WTC11 (cell line): ENCODE measurements at regions of chr3 and their contacts with region 1.

Region 1: GRCh38 chr3:24726423-24726822 is 231.8 kb upstream of the THRB start:
- DNase-seq: no peak
- ATAC-seq: no peak
- H3K4me3 Mint-ChIP-seq: no peak overlapping the region
- H3K27ac Mint-ChIP-seq: no peak overlapping the region
- H3K4me1 Mint-ChIP-seq: no peaks in the 10 kb centered on the region
- H3K27me3 Mint-ChIP-seq: no peaks in the 10 kb centered on the region; the same call in 1 of the 2 replicates
- CTCF ChIP-seq: no peak

Region 2: GRCh38 chr3:24680214-24680967 is 46.0 kb before region 1 on chr3:
- CTCF ChIA-PET with region 1: interaction called, 10 read pairs
- POLR2A ChIA-PET with region 1: no interaction called
- DNase-seq: peak; percentile 83
- ATAC-seq: peak; percentile 71
- H3K4me3 Mint-ChIP-seq: no peak overlapping the region
- H3K27ac Mint-ChIP-seq: no peak overlapping the region
- H3K4me1 Mint-ChIP-seq: peaks cover 20% of the 10 kb centered on the region
- H3K27me3 Mint-ChIP-seq: no peaks in the 10 kb centered on the region
- CTCF ChIP-seq: peak; percentile 74

Region 3: DNA sequence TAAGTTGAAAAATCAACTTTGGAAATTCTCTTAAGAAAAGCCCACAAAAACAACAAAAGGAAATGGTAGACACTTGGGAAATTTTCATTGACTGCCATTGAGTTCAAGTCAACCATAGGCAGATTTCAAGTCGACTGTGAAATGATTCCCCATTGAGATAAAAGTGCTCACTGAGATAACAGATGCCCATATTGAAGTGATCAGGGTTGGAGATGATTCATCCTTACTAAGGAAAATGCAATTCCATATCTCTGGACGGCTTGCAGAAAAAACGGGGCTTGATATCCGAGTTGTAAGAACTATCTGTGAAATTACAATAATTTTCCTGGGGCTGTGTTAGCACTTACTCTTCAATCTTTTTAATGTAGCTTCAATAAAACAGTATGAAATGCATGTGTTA is 141.4 kb after region 1 on chr3:
- CTCF ChIA-PET with region 1: no interaction called
- POLR2A ChIA-PET with region 1: no interaction called
- DNase-seq: no peak
- ATAC-seq: no peak
- H3K4me3 Mint-ChIP-seq: no peak overlapping the region
- H3K27ac Mint-ChIP-seq: no peak overlapping the region
- H3K4me1 Mint-ChIP-seq: peaks cover 13% of the 10 kb centered on the region
- H3K27me3 Mint-ChIP-seq: no peaks in the 10 kb centered on the region
- CTCF ChIP-seq: no peak